B cell (primary cell): ENCODE measurements at regions of chr11 and their contacts with region 1.

Region 1: DNA sequence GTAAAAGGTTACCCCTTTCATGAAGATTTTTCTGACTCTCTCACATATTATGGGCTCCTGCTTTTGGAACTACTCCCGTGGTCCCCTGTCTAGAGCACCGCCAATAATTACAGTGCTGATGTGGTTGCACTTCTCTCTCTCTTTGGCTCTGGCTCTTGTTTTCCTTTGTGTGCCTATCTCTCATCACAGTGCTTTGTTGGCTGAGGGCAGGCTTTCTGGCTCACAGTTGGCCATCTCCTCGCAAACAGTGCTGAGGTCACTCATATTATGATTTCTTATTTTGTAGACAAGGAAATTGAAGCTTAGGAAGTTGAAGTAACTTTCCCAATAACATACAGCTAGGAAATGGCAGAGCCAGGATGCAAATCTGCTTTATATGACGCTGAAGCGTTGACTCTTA is 192.5 kb downstream of the DDX10 start:
- DNase-seq: no peak
- ATAC-seq: no peak
- H3K4me3 ChIP-seq: no peak overlapping the region
- H3K4me3 Mint-ChIP-seq: no peak overlapping the region
- H3K27ac ChIP-seq: no peak overlapping the region
- H3K27ac Mint-ChIP-seq: no peak overlapping the region
- H3K4me1 ChIP-seq: peaks cover 16 to 17% of the 10 kb centered on the region in 2 donors
- H3K4me1 Mint-ChIP-seq: peaks cover 24% of the 10 kb centered on the region
- H3K27me3 ChIP-seq: no peaks in the 10 kb centered on the region
- H3K27me3 Mint-ChIP-seq: no peaks in the 10 kb centered on the region
- CTCF ChIP-seq: no peak

Region 2: DNA sequence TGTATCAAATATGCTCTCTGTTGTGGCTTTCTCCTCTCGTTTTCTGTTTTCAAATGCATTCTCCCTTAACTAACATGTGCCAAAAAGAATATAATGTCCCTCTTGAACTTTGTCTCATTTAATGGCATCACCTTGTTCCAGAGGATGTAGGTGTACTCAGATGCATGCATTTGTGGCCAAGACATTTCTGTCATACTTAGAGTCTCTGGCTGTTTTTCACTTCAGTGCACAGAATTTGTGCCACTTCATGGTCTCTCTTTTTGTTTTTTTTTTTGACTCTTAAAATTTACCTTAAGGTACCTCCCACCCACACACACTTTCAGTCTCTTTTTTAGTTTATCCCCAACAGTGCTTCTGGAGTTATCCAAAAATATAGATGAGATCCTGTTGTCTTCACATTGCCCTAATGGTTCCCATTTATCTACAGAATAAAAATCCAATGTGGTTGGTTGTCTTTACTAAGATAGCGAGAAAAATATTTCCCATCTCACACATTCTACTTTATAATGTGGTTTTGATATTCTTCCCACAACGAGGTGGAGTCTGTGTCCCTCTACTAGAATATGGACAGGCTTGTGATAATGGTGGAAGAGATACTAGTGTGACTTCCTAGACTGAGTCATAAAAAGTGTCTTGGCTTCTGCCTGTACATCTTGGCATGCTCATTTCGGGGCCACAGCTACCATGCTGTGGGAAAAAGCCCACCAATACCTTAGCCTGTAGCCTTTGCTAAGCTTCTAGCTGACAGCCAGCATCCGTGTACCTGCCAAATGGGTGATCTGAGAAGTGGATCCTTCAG is 66.7 kb before region 1 on chr11:
- CTCF ChIA-PET with region 1: no interaction called
- POLR2A ChIA-PET with region 1: no interaction called
- intact Hi-C with region 1: no loop called
- DNase-seq: no peak
- ATAC-seq: no peak
- H3K4me3 ChIP-seq: no peak overlapping the region
- H3K4me3 Mint-ChIP-seq: no peak overlapping the region
- H3K27ac ChIP-seq: no peak overlapping the region
- H3K27ac Mint-ChIP-seq: no peak overlapping the region
- H3K4me1 ChIP-seq: no peaks in the 10 kb centered on the region
- H3K4me1 Mint-ChIP-seq: peaks cover 38% of the 10 kb centered on the region
- H3K27me3 ChIP-seq: no peaks in the 10 kb centered on the region
- H3K27me3 Mint-ChIP-seq: no peaks in the 10 kb centered on the region
- CTCF ChIP-seq: no peak

Region 3: GRCh38 chr11:109012991-109013390 is 155.6 kb after region 1 on chr11:
- CTCF ChIA-PET with region 1: no interaction called
- POLR2A ChIA-PET with region 1: no interaction called
- intact Hi-C with region 1: no loop called
- DNase-seq: no peak
- ATAC-seq: no peak
- H3K4me3 ChIP-seq: no peak overlapping the region
- H3K4me3 Mint-ChIP-seq: no peak overlapping the region
- H3K27ac ChIP-seq: no peak overlapping the region
- H3K27ac Mint-ChIP-seq: no peak overlapping the region
- H3K4me1 ChIP-seq: no peaks in the 10 kb centered on the region
- H3K4me1 Mint-ChIP-seq: no peaks in the 10 kb centered on the region
- H3K27me3 ChIP-seq: no peaks in the 10 kb centered on the region
- H3K27me3 Mint-ChIP-seq: peaks cover 3% of the 10 kb centered on the region
- CTCF ChIP-seq: no peak

Region 4: DNA sequence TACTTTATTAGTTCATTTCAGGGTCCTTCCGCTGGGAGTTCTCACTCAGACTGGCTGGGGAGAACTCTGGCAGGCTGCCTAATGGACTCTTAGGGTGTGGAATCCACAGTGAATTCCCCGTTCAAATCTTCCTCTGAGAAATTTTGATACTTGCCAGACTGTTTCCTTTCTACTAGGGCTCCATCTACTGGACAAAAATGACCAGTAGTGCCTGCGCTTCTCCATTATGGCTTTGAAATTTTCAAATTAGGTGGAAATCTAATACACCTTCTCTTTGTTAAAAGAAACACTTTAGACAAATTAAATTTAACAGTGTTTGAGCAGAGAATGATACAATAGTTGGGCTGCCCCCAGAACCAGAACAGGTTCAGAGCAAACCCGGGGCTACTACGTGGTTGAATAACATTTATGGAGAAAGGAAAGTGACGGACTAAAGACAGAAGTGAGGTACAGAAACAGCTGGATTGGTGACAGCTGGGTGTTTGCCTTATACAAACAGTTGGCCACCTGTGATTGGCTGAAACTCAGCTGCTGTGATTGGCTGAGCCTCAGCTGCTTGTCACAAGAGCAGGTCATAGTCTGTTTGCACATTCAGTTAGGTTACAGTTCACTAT is 1519.4 kb after region 1 on chr11:
- CTCF ChIA-PET with region 1: no interaction called
- POLR2A ChIA-PET with region 1: no interaction called
- intact Hi-C with region 1: loop called (anchors 5 kb)
- DNase-seq: peak; percentile 61
- ATAC-seq: peak; percentile 28
- H3K4me3 ChIP-seq: no peak overlapping the region
- H3K4me3 Mint-ChIP-seq: peak overlapping the region; percentile 35
- H3K27ac ChIP-seq: no peak overlapping the region
- H3K27ac Mint-ChIP-seq: no peak overlapping the region
- H3K4me1 ChIP-seq: peaks cover 0 to 3% of the 10 kb centered on the region in 2 donors
- H3K4me1 Mint-ChIP-seq: no peaks in the 10 kb centered on the region
- H3K27me3 ChIP-seq: peaks cover 0 to 3% (median 0%) of the 10 kb centered on the region in 4 experiments
- H3K27me3 Mint-ChIP-seq: peaks cover 3% of the 10 kb centered on the region
- CTCF ChIP-seq: peak; percentile 80